MCF 10A (cell line): ENCODE measurements at regions of chr1 and their contacts with region 1.

Region 1: DNA sequence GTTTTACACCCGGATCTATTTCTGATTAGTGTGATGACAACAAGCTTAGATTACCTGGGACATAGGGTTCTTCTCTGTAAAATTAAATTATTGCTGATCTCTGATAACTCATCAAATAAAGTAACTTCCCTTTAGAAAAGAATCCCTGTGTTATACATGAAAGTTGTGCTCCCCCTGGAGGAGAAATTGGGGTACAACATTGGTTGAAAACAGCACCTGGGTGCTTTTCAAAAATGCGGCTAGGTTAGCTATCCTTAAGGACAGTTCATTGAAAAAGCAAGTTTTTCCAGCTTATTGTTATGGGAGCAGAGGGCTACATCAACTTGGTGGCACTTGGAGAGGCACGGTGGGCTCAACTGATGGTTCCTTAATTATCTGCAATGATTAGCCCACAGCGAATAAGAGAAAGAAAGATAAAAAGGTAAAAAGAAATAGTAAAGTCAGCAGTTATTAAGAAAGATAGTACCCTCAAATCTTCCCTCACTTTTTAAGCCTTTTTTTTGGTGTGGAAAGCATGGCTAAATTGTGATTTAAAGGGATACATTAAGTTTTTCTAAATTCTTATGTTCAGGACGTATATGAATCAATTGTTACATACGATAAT is 97.8 kb downstream of the FMN2 start:
- DNase-seq: peak; percentile 88
- H3K4me3 Mint-ChIP-seq: no peak overlapping the region
- H3K27ac Mint-ChIP-seq: no peak overlapping the region
- H3K4me1 Mint-ChIP-seq: peaks cover 14% of the 10 kb centered on the region
- H3K27me3 Mint-ChIP-seq: peaks cover 34% of the 10 kb centered on the region
- CTCF ChIP-seq: peak; percentile 90

Region 2: DNA sequence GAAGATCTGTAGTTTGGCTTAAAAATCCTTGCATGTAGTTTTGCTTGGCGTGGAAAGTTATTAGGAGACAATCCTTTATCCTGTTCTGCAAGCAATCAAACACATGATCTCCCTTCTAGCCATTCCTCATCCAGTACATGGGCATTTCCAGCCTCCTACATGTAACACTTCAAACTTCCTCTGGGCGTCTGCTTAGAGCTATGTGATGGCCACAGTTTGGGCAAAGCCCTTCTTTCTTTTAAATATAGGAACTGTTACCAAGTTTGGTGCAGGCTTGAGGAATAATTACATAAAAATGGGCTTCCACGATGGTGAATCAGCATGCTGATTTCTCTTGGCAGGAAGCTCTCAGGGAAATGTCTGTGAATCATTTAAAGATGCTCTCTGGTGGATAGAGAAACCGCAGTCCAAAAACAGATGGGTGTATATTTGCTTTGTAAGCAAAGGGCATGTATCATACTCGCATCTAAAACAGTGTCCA is 274.7 kb before region 1 on chr1:
- CTCF ChIA-PET with region 1: no interaction called
- POLR2A ChIA-PET with region 1: no interaction called
- intact Hi-C with region 1: no loop called
- DNase-seq: peak; percentile 94
- H3K4me3 Mint-ChIP-seq: no peak overlapping the region
- H3K27ac Mint-ChIP-seq: peak overlapping the region; percentile 59
- H3K4me1 Mint-ChIP-seq: peaks cover 40% of the 10 kb centered on the region
- H3K27me3 Mint-ChIP-seq: no peaks in the 10 kb centered on the region
- CTCF ChIP-seq: peak; percentile 18

Region 3: GRCh38 chr1:240004086-240004749 is 185.3 kb before region 1 on chr1:
- CTCF ChIA-PET with region 1: interaction called, 13 read pairs
- POLR2A ChIA-PET with region 1: no interaction called
- intact Hi-C with region 1: no loop called
- DNase-seq: peak; percentile 69
- H3K4me3 Mint-ChIP-seq: no peak overlapping the region
- H3K27ac Mint-ChIP-seq: no peak overlapping the region
- H3K4me1 Mint-ChIP-seq: peaks cover 9% of the 10 kb centered on the region
- H3K27me3 Mint-ChIP-seq: no peaks in the 10 kb centered on the region
- CTCF ChIP-seq: peak; percentile 96

Region 4: DNA sequence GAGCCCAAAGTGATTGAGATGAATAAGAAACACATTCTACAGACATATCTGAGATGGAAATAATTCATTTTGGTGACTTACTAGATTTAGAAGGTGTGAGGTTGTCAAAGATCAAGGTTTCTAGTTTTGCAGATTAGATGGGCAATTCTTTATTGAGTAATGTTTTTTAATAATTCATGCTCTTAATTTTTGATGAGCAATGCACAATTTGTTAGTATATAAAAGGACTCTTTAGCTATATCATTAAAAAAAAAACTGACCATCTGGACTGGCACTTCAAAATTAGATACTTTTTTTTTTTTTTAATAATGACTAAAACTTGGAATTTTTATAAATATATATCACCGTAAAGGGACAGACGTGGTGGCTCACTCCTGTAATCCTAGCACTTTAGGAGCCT is 33.9 kb before region 1 on chr1:
- CTCF ChIA-PET with region 1: interaction called, 37 read pairs
- POLR2A ChIA-PET with region 1: no interaction called
- intact Hi-C with region 1: no loop called
- DNase-seq: no peak
- H3K4me3 Mint-ChIP-seq: no peak overlapping the region
- H3K27ac Mint-ChIP-seq: no peak overlapping the region
- H3K4me1 Mint-ChIP-seq: no peaks in the 10 kb centered on the region
- H3K27me3 Mint-ChIP-seq: no peaks in the 10 kb centered on the region
- CTCF ChIP-seq: no peak

Region 5: DNA sequence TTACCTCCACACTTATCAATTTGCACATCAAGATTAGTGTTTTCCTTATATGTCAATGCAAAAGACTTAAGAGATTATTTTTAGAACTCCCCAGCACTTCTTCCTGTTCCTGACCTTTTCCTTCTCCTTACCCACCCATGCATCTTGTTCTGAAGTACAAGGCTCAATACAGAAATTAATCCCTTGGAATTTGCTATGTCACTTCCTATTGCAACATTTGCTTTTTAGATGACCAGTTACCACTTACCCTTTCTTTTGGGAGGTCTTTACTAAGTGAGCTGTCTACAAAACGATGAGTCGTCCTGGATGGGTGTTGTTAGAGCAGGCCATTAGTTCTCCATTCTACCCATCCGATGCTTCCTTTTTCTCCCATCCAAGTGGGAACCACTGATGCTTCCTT is 123.4 kb after region 1 on chr1:
- CTCF ChIA-PET with region 1: interaction called, 11 read pairs
- POLR2A ChIA-PET with region 1: no interaction called
- intact Hi-C with region 1: loop called (anchors 1 kb)
- DNase-seq: peak; percentile 97
- H3K4me3 Mint-ChIP-seq: no peak overlapping the region
- H3K27ac Mint-ChIP-seq: peak overlapping the region; percentile 40
- H3K4me1 Mint-ChIP-seq: peaks cover 34% of the 10 kb centered on the region
- H3K27me3 Mint-ChIP-seq: no peaks in the 10 kb centered on the region
- CTCF ChIP-seq: no peak

Region 6: DNA sequence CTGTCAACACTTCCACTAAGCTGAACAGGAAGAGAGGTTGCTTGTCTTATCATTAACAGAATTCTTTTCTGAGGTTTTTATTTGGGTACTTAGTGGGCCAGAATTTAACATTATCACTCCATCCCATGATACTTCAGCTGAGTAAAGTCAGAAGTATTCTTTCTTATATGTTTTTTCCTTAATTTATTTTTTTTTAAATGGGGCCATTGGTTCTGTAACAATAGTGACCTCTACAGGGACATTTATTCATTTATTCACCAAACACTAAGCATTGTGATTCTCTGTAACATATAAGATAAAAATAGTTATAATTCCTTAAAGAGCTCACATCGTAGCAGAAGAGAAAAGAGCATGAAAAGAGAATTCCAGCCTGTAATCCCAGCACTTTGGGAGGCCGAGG is 412.7 kb after region 1 on chr1:
- CTCF ChIA-PET with region 1: interaction called, 140 read pairs
- POLR2A ChIA-PET with region 1: interaction called, 4 read pairs
- intact Hi-C with region 1: loop called (anchors 1 kb)
- DNase-seq: no peak
- H3K4me3 Mint-ChIP-seq: no peak overlapping the region
- H3K27ac Mint-ChIP-seq: no peak overlapping the region
- H3K4me1 Mint-ChIP-seq: no peaks in the 10 kb centered on the region
- H3K27me3 Mint-ChIP-seq: no peaks in the 10 kb centered on the region
- CTCF ChIP-seq: peak; percentile 49

Region 7: DNA sequence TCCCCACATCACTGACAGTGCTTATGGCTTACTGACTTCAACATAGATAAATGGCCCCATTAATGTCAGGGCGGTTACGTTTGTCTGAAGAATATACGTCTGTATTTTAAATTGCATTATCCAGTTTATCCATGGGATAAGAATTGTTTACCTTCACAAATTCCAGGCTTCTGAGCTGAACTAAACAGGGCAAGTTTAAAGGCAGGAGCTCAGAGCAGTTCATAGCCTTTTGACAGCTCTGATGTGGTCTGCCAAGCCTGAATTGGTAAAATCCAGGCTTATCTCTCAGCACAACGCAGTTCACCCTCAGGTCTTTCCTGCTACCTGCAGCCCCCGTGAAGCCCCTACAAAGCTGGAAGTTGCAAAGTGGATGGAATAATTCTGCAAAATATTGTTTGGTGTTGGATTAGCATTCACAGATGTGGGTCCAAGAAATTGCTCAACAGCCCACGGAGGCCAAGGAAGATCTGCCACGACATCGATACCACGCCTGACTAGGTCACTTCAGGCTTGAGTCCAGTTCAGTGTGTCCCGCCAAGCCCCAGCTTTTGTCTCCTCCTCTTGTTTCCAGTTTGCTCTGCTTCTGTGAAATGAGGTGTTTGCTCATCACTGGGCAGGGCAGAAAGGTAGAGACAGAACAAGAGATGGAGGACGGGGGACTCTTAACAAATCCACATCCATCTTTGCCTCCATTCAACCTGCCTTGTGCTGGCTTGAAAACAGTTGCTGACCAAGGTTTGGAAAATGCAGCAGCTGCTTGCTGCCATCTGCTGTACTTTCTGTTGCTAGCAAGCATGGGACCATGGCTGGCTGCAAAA is 502.2 kb after region 1 on chr1:
- CTCF ChIA-PET with region 1: interaction called, 143 read pairs
- POLR2A ChIA-PET with region 1: interaction called, 3 read pairs
- intact Hi-C with region 1: loop called (anchors 1 kb)
- DNase-seq: peak; percentile 71
- H3K4me3 Mint-ChIP-seq: no peak overlapping the region
- H3K27ac Mint-ChIP-seq: no peak overlapping the region
- H3K4me1 Mint-ChIP-seq: no peaks in the 10 kb centered on the region
- H3K27me3 Mint-ChIP-seq: no peaks in the 10 kb centered on the region
- CTCF ChIP-seq: peak; percentile 98